ENCODE measurements at regions of chr5 and their contacts with region 1.

Region 1: GRCh38 chr5:7941692-7942091 is 72.7 kb downstream of the MTRR start:
- DNase-seq: no peak
- H3K4me3 ChIP-seq: no peak overlapping the region
- H3K27ac ChIP-seq: no peak overlapping the region
- H3K4me1 ChIP-seq: no peaks in the 10 kb centered on the region
- H3K27me3 ChIP-seq: peaks cover 78% of the 10 kb centered on the region
- CTCF ChIP-seq: no peak

Region 2: GRCh38 chr5:7815892-7816534 is 125.7 kb before region 1 on chr5:
- CTCF ChIA-PET with region 1: no interaction called
- POLR2A ChIA-PET with region 1: interaction called, 17 read pairs
- intact Hi-C with region 1: no loop called
- DNase-seq: peak in 1 of 2 experiments; percentile 77
- H3K4me3 ChIP-seq: no peak overlapping the region
- H3K27ac ChIP-seq: no peak overlapping the region
- H3K4me1 ChIP-seq: no peaks in the 10 kb centered on the region
- H3K27me3 ChIP-seq: peaks cover 96% of the 10 kb centered on the region
- CTCF ChIP-seq: peak; percentile 92

Region 3: DNA sequence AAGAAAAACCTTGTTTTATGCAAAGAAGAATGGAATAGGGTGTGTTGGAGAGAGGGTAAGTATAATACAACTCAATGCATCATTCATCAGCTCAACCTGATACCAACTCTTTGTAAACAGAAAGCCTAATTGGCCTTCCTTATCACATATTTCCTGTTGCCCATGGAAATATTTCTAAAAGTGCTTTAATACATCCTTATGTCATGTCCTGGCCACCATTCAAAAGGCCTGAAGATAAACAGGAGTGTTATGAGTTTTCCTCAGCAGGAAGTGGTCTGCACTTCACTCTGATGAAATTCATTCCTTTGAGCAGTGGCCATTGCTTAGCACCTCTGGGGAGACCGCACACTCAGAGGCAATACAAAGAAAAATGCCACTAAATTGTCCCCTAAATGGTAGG is 1093.0 kb after region 1 on chr5:
- CTCF ChIA-PET with region 1: no interaction called
- POLR2A ChIA-PET with region 1: no interaction called
- intact Hi-C with region 1: loop called (anchors 5 kb)
- DNase-seq: no peak
- H3K4me3 ChIP-seq: no peak overlapping the region
- H3K27ac ChIP-seq: no peak overlapping the region
- H3K4me1 ChIP-seq: no peaks in the 10 kb centered on the region
- H3K27me3 ChIP-seq: no peaks in the 10 kb centered on the region
- CTCF ChIP-seq: no peak